Dorsolateral prefrontal cortex (tissue), 120 donors: ENCODE measurements at regions of chr3 and their contacts with region 1.

Region 1: GRCh38 chr3:180018543-180018942 is 18.2 kb downstream of the PEX5L start:
- DNase-seq: peak in 8 of 10 donors; percentile 38 to 78 (median 57)
- H3K4me3 ChIP-seq: peak overlapping the region in 10 of 59 donors; percentile 0 to 31 (median 12)
- H3K27ac ChIP-seq: peak overlapping the region in 56 of 59 donors; percentile 12 to 90 (median 76)
- H3K27me3 ChIP-seq: no peaks in the 10 kb centered on the region
- CTCF ChIP-seq: peak in 55 of 56 donors; percentile 22 to 82 (median 55)

Region 2: DNA sequence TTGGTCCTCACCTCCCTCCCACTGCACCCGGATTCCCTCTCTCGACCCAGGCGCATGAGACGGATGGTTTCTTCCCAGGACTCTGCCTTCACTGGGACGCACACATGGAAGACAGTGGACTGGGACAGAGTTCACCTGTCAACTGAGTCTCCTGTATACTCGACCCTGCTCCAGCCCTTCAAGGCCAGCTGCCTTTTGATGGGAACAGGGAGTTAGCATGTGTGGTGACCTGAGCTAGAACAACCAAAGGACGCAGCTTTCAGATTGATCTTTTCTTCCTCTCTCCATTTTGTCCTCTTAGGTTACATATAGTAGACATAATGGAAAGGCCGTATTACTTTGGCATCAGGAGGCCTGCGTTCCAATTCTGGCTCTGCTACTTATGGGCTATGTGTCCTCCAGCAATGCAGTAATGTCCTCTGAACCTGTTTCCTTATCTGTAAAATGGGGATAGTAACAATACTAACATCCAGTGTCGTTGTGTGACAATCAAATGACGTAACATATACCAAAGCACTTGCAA is 75.9 kb before region 1 on chr3:
- intact Hi-C with region 1: loop called in 1 of 2 experiments (anchors 5 kb)
- DNase-seq: no peak
- H3K4me3 ChIP-seq: peak overlapping the region; percentile 7 to 68 (median 43)
- H3K27ac ChIP-seq: peak overlapping the region; percentile 70 to 97 (median 89)
- H3K27me3 ChIP-seq: no peaks in the 10 kb centered on the region
- CTCF ChIP-seq: peak in 2 of 56 donors; percentile 0 to 1

Region 3: DNA sequence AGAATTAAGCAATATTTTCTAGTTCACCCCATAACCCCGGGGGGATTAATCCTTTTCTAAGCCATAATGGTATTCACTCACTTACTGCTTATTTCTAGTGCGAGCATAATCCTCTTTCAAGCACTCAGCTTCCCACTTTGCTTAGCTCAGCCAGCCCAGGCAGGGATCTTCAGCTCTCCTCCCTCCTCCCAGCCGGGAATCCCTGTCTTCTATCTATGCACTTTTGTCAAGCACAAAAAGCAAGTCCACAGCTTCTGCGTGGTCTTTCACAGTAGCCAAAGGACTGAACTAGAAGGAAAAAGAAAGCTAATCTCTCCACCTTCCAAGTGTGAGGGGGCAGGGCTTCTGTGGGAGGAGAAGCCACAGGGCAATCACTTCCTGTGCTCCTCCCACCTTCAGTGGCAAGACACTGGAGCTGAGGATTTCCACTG is 44.6 kb before region 1 on chr3:
- intact Hi-C with region 1: loop called in 1 of 2 experiments (anchors 5 kb)
- DNase-seq: peak in 8 of 10 donors; percentile 35 to 70 (median 58)
- H3K4me3 ChIP-seq: peak overlapping the region; percentile 11 to 74 (median 53)
- H3K27ac ChIP-seq: peak overlapping the region in 58 of 59 donors; percentile 73 to 100 (median 94)
- H3K27me3 ChIP-seq: no peaks in the 10 kb centered on the region
- CTCF ChIP-seq: peak in 2 of 56 donors; percentile 5 to 10